PC-9 (cell line): ENCODE measurements at regions of chr10 and their contacts with region 1.

Region 1: GRCh38 chr10:15097011-15097812 is at the start of gene RPP38:
- DNase-seq: peak; percentile 87 to 95
- H3K4me3 ChIP-seq: peak within 1 kb of the TSS; percentile 87
- H3K27ac ChIP-seq: peak within 1 kb of the TSS; percentile 92
- H3K4me1 ChIP-seq: peaks cover 9% of the 10 kb centered on the region
- H3K27me3 ChIP-seq: no peaks in the 10 kb centered on the region
- CTCF ChIP-seq: no peak
- total RNA-seq, gene RPP38: 15.9 and 16.9 TPM in 2 replicates

Region 2: GRCh38 chr10:13787015-13787421 is 1310.2 kb before region 1 on chr10:
- CTCF ChIA-PET with region 1: no interaction called
- POLR2A ChIA-PET with region 1: no interaction called
- intact Hi-C with region 1: loop called (anchors 10 kb)
- DNase-seq: no peak
- H3K4me3 ChIP-seq: no peak overlapping the region
- H3K27ac ChIP-seq: no peak overlapping the region
- H3K4me1 ChIP-seq: peaks cover 15% of the 10 kb centered on the region
- H3K27me3 ChIP-seq: no peaks in the 10 kb centered on the region
- CTCF ChIP-seq: no peak

Region 3: GRCh38 chr10:14878266-14879054 is 218.8 kb before region 1 on chr10 and contains the start of gene SUV39H2:
- CTCF ChIA-PET with region 1: no interaction called
- POLR2A ChIA-PET with region 1: no interaction called
- intact Hi-C with region 1: loop called (anchors 1 kb)
- DNase-seq: peak; percentile 76 to 96
- H3K4me3 ChIP-seq: peak within 1 kb of the TSS; percentile 67
- H3K27ac ChIP-seq: peak within 1 kb of the TSS; percentile 79
- H3K4me1 ChIP-seq: peaks cover 24% of the 10 kb centered on the region
- H3K27me3 ChIP-seq: no peaks in the 10 kb centered on the region
- CTCF ChIP-seq: no peak
- total RNA-seq, gene SUV39H2: 13.4 and 20.9 TPM in 2 replicates

Region 4: GRCh38 chr10:14954001-14954770 is 143.0 kb before region 1 on chr10 and contains the start of gene DCLRE1C:
- CTCF ChIA-PET with region 1: no interaction called
- POLR2A ChIA-PET with region 1: no interaction called
- intact Hi-C with region 1: loop called (anchors 1 kb)
- DNase-seq: peak; percentile 88 to 94
- H3K4me3 ChIP-seq: peak within 1 kb of the TSS; percentile 93
- H3K27ac ChIP-seq: peak within 1 kb of the TSS; percentile 97
- H3K4me1 ChIP-seq: peaks cover 14% of the 10 kb centered on the region
- H3K27me3 ChIP-seq: no peaks in the 10 kb centered on the region
- CTCF ChIP-seq: no peak
- total RNA-seq, gene DCLRE1C: 14.0 and 15.6 TPM in 2 replicates

Region 5: GRCh38 chr10:14971867-14972448 is 125.3 kb before region 1 on chr10:
- CTCF ChIA-PET with region 1: interaction called, 21 read pairs
- POLR2A ChIA-PET with region 1: no interaction called
- intact Hi-C with region 1: no loop called
- DNase-seq: peak in 1 of 2 experiments; percentile 29
- H3K4me3 ChIP-seq: no peak overlapping the region
- H3K27ac ChIP-seq: no peak overlapping the region
- H3K4me1 ChIP-seq: no peaks in the 10 kb centered on the region
- H3K27me3 ChIP-seq: no peaks in the 10 kb centered on the region
- CTCF ChIP-seq: peak; percentile 53